PC-3 (cell line): ENCODE measurements at regions of chr1 and their contacts with region 1.

Region 1: GRCh38 chr1:27725374-27726173 is at the start of gene FAM76A:
- DNase-seq: peak; percentile 99
- ATAC-seq: peak; percentile 97
- H3K4me3 ChIP-seq: peak within 1 kb of the TSS; percentile 80
- H3K27ac ChIP-seq: peak within 1 kb of the TSS; percentile 35
- H3K4me1 ChIP-seq: peaks cover 11% of the 10 kb centered on the region; the same call in 1 of the 2 replicates
- H3K27me3 ChIP-seq: no peaks in the 10 kb centered on the region
- CTCF ChIP-seq: peak; percentile 58
- total RNA-seq, gene FAM76A: 9.6 and 9.9 TPM in 2 replicates

Region 2: DNA sequence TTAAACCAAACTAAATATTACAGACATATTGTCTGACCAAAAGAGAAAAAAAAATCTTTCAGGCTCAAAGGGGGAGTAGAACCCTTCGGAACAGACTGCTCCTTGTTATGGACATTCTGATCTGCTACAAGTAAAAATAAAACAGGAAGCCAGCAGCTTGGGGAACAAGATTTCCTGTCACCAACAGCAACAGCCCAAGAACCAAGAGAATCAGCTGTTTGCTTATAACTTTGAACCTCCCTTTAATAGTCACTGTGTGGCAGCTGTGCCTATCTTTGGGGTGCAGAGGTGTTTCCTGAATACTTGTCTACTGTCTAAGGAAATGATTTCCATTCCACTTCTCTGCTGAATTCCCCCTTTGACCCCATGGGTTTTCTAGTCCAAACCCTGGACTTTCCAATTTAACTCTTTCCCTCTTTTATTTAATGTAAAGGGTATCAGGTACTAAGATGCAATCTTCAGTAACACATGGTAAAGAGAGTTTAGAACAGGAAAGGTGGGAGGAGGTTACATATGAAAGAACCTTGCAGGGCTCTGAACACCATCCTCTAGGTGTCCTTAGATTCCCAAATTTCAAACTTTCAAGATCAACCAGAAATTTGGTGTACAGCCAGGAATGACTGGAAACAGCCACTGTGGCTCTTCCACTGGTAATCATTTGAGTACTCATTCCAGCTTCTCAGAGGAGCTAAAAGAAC is 294.5 kb before region 1 on chr1:
- CTCF ChIA-PET with region 1: no interaction called
- POLR2A ChIA-PET with region 1: interaction called, 24 read pairs
- intact Hi-C with region 1: no loop called
- DNase-seq: peak; percentile 14
- ATAC-seq: no peak; the same call in 1 of the 2 replicates
- H3K4me3 ChIP-seq: no peak overlapping the region
- H3K27ac ChIP-seq: no peak overlapping the region
- H3K4me1 ChIP-seq: peaks cover 2% of the 10 kb centered on the region
- H3K27me3 ChIP-seq: no peaks in the 10 kb centered on the region
- CTCF ChIP-seq: no peak

Region 3: DNA sequence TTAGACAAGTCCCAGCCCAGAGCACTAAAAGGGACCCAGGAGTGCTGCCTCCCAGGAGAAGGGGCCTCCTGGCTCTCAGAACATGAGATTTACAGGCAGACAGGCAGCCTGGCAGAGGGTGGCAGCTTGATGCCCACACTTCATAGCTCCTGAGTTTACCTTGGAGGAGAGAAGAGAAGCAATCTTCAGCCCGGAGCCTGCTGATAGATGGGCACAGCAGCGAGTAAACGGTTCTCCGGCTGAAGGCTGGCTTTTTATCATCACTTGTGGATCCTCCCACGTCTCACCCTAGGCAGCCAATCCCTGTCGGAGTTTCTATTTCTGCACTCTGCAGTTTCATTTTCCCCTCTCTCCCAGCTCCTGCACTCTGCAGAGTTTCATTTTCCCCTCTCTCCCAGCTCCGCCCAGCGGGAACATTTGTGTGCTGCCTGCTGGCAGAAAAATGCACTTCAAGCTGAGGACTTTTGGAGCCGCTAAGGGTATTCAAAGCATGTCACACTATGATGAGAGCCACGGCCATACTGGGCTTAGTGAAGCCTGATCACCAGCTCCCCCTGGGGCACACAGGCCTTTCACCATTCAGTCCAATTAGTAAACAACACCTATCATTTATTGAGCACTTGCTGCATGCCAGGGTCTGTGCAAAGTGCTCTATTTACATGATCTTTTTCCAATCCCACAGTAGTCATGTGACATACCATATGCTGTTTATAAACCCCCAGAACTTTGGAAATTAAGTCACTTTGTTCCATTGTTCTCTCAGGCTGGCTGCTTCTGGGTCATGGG is 53.4 kb before region 1 on chr1 and contains the start of gene IFI6:
- CTCF ChIA-PET with region 1: interaction called, 20 read pairs
- POLR2A ChIA-PET with region 1: interaction called, 10 read pairs
- intact Hi-C with region 1: no loop called
- DNase-seq: peak; percentile 95
- ATAC-seq: peak; percentile 98
- H3K4me3 ChIP-seq: peak within 1 kb of the TSS; percentile 67
- H3K27ac ChIP-seq: peak within 1 kb of the TSS; percentile 3
- H3K4me1 ChIP-seq: peaks cover 13% of the 10 kb centered on the region; the same call in 1 of the 2 replicates
- H3K27me3 ChIP-seq: no peaks in the 10 kb centered on the region
- CTCF ChIP-seq: peak; percentile 50
- total RNA-seq, gene IFI6: 15.7 and 16.5 TPM in 2 replicates

Region 4: DNA sequence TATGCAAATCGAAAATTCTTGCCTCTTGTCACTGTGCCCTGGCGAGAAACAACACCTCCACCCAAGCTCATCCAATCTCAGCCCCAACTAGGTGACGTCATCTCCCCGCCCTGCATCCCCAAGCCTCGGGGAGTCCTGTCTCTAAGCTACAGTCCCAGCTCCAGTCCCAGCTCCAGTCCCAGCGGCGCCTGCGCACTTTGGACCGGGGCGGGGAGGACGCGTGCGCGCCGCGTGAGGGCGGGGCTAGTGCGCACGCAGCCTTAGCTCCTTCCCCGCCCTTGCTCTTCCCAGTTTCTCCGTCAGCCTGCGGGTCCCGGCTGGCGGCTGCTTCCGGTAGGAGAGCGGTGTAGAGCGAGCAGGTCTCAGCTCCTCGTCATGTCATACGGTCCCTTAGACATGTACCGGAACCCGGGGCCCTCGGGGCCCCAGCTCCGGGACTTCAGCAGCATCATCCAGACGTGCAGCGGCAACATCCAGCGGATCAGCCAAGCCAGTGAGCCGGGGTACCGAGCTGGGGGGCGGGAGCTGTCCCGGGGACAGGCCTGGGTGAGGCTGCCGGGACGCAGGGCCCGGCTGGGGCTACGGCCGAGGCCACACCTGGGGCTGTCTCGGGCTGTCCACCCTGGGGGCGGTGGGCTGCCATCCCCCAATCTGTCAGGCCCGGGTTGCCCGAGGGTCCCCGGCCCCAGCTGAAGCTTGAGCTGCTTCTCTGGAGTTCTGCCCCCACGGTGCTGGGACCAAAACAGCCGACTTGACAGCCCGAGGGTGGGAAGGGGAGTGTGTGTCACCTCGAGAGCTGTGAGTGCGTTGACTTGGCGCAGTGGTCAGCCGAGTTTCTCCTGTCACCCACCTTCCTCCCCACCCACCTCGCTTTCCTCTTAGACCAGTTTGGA is 47.6 kb after region 1 on chr1 and contains the start of gene STX12:
- CTCF ChIA-PET with region 1: interaction called, 8 read pairs
- POLR2A ChIA-PET with region 1: interaction called, 12 read pairs
- intact Hi-C with region 1: no loop called
- DNase-seq: peak; percentile 99
- ATAC-seq: peak; percentile 95
- H3K4me3 ChIP-seq: peak within 1 kb of the TSS; percentile 79
- H3K27ac ChIP-seq: no peak within 1 kb of the TSS
- H3K4me1 ChIP-seq: peaks cover 19% of the 10 kb centered on the region
- H3K27me3 ChIP-seq: no peaks in the 10 kb centered on the region
- CTCF ChIP-seq: no peak
- total RNA-seq, gene STX12: 18.6 and 28.5 TPM in 2 replicates

Region 5: GRCh38 chr1:27830621-27831424 is 105.2 kb after region 1 on chr1 and contains the start of gene PPP1R8:
- CTCF ChIA-PET with region 1: no interaction called
- POLR2A ChIA-PET with region 1: interaction called, 11 read pairs
- intact Hi-C with region 1: no loop called
- DNase-seq: peak; percentile 98
- ATAC-seq: peak; percentile 99
- H3K4me3 ChIP-seq: peak within 1 kb of the TSS; percentile 95
- H3K27ac ChIP-seq: peak within 1 kb of the TSS; percentile 55
- H3K4me1 ChIP-seq: peaks cover 19% of the 10 kb centered on the region
- H3K27me3 ChIP-seq: no peaks in the 10 kb centered on the region
- CTCF ChIP-seq: no peak
- total RNA-seq, gene PPP1R8: 65.7 and 85.0 TPM in 2 replicates